ENCODE measurements at regions of chr3 and their contacts with region 1.

Region 1: GRCh38 chr3:118884748-118885206 is 149.9 kb downstream of the IGSF11 start:
- DNase-seq: peak; percentile 87
- ATAC-seq: peak; percentile 87
- H3K4me3 Mint-ChIP-seq: no peak overlapping the region
- H3K27ac Mint-ChIP-seq: no peak overlapping the region
- H3K4me1 Mint-ChIP-seq: peaks cover 5% of the 10 kb centered on the region
- H3K27me3 Mint-ChIP-seq: peaks cover 12% of the 10 kb centered on the region
- CTCF ChIP-seq: peak; percentile 92

Region 2: GRCh38 chr3:117671722-117672318 is 1213.0 kb before region 1 on chr3:
- CTCF ChIA-PET with region 1: no interaction called
- POLR2A ChIA-PET with region 1: no interaction called
- intact Hi-C with region 1: no loop called
- DNase-seq: no peak
- ATAC-seq: no peak
- H3K4me3 Mint-ChIP-seq: no peak overlapping the region
- H3K27ac Mint-ChIP-seq: no peak overlapping the region
- H3K4me1 Mint-ChIP-seq: no peaks in the 10 kb centered on the region
- H3K27me3 Mint-ChIP-seq: no peaks in the 10 kb centered on the region
- CTCF ChIP-seq: no peak

Region 3: GRCh38 chr3:118536764-118537163 is 348.0 kb before region 1 on chr3:
- CTCF ChIA-PET with region 1: no interaction called
- POLR2A ChIA-PET with region 1: no interaction called
- intact Hi-C with region 1: no loop called
- DNase-seq: no peak
- ATAC-seq: no peak
- H3K4me3 Mint-ChIP-seq: no peak overlapping the region
- H3K27ac Mint-ChIP-seq: no peak overlapping the region
- H3K4me1 Mint-ChIP-seq: no peaks in the 10 kb centered on the region
- H3K27me3 Mint-ChIP-seq: no peaks in the 10 kb centered on the region
- CTCF ChIP-seq: no peak

Region 4: GRCh38 chr3:118782755-118783202 is 102.0 kb before region 1 on chr3:
- CTCF ChIA-PET with region 1: no interaction called
- POLR2A ChIA-PET with region 1: no interaction called
- intact Hi-C with region 1: no loop called
- DNase-seq: no peak
- ATAC-seq: no peak
- H3K4me3 Mint-ChIP-seq: no peak overlapping the region
- H3K27ac Mint-ChIP-seq: no peak overlapping the region
- H3K4me1 Mint-ChIP-seq: no peaks in the 10 kb centered on the region
- H3K27me3 Mint-ChIP-seq: peaks cover 2% of the 10 kb centered on the region
- CTCF ChIP-seq: no peak

Region 5: GRCh38 chr3:118909763-118910162 is 25.0 kb after region 1 on chr3:
- CTCF ChIA-PET with region 1: interaction called, 17 read pairs
- POLR2A ChIA-PET with region 1: no interaction called
- intact Hi-C with region 1: no loop called
- DNase-seq: no peak
- ATAC-seq: no peak
- H3K4me3 Mint-ChIP-seq: no peak overlapping the region
- H3K27ac Mint-ChIP-seq: no peak overlapping the region
- H3K4me1 Mint-ChIP-seq: no peaks in the 10 kb centered on the region
- H3K27me3 Mint-ChIP-seq: no peaks in the 10 kb centered on the region
- CTCF ChIP-seq: no peak

Region 6: DNA sequence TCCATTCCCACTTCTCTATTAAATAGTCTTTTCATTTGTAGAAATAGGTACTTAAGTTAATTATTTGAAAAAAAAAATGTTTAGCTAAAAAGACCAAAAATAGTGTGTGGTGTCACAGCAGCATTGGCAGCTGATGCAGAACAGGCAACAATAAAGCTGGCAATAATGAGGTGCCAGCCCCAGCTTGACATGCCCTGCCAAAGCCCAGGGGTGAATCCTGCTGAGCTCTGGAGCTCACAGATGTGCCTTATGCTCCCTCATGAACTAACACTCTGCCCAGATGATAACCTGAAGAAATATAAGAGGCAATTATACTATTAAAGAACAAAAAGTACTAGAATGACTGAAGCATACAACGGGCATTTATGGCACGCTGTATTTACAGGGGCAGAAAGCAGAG is 86.0 kb after region 1 on chr3:
- CTCF ChIA-PET with region 1: interaction called, 45 read pairs
- POLR2A ChIA-PET with region 1: no interaction called
- intact Hi-C with region 1: no loop called
- DNase-seq: no peak
- ATAC-seq: no peak
- H3K4me3 Mint-ChIP-seq: no peak overlapping the region
- H3K27ac Mint-ChIP-seq: no peak overlapping the region
- H3K4me1 Mint-ChIP-seq: no peaks in the 10 kb centered on the region
- H3K27me3 Mint-ChIP-seq: no peaks in the 10 kb centered on the region
- CTCF ChIP-seq: no peak

Region 7: DNA sequence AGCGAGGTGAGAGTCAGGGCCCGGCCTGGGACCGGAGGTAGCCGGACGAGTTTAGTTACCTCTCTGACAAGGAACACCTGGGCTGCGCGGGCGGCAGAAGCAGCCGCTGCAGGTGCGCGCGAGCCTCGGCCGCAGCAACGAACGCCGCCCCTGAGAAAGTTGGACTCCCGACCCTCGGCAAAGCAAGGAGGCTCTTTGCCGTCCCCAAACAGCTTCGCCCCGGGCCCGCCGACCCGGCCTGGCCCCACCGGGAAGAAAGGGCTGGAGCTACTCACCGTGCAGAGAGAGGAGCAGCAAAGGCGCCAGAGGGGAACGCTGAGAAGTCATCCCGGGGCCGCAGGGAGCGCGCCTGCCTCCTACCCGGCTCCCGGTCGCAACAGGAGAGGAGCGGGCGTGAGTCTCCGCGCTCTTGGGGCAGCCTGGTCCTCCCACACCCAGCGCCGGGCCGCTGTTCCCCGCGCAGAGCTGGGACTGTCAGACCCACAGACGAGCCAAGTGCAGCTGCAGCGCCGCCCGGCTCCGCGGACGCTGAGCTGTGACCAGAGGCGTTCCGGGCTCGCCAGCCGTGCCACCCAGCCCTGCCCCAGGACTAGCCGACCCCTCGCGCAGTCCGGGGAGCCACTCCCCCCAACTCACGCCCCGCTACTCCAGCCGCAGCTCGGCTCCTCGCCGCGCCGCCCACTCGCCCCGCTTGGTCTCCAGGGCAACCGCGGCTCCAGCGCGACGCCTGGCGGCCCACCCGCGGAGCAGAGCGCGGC is 149.7 kb after region 1 on chr3 and contains the start of gene IGSF11:
- CTCF ChIA-PET with region 1: interaction called, 305 read pairs
- POLR2A ChIA-PET with region 1: no interaction called
- intact Hi-C with region 1: loop called (anchors 1 kb)
- DNase-seq: peak; percentile 71
- ATAC-seq: peak; percentile 91
- H3K4me3 Mint-ChIP-seq: peak within 1 kb of the TSS; percentile 79
- H3K27ac Mint-ChIP-seq: no peak within 1 kb of the TSS
- H3K4me1 Mint-ChIP-seq: peaks cover 12% of the 10 kb centered on the region
- H3K27me3 Mint-ChIP-seq: peaks cover 44% of the 10 kb centered on the region
- CTCF ChIP-seq: peak; percentile 73
- total RNA-seq, gene IGSF11: 0.07 TPM in 1 of 2 experiments, not detected in the other

Region 8: DNA sequence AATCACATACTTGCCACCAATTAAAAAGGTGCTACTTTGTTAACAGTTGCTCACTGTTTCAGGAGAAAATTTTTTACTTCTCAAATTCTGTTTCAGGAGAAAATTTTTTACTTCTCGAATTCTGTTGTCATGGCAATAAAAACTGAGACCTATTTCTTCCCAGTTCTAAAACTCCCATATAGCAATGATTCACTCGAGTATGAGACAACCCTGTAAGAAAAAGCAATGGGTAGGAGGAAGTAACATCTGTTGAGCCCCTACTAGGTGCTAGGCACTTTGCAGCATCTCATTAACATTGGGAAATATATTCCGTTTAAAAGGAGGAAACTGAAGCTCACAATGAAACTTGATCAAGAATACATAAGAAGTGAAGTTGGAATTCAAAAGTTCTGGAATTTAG is 184.9 kb after region 1 on chr3:
- CTCF ChIA-PET with region 1: interaction called, 29 read pairs
- POLR2A ChIA-PET with region 1: no interaction called
- intact Hi-C with region 1: no loop called
- DNase-seq: no peak
- ATAC-seq: no peak
- H3K4me3 Mint-ChIP-seq: no peak overlapping the region
- H3K27ac Mint-ChIP-seq: no peak overlapping the region
- H3K4me1 Mint-ChIP-seq: no peaks in the 10 kb centered on the region
- H3K27me3 Mint-ChIP-seq: peaks cover 11% of the 10 kb centered on the region
- CTCF ChIP-seq: no peak

Region 9: DNA sequence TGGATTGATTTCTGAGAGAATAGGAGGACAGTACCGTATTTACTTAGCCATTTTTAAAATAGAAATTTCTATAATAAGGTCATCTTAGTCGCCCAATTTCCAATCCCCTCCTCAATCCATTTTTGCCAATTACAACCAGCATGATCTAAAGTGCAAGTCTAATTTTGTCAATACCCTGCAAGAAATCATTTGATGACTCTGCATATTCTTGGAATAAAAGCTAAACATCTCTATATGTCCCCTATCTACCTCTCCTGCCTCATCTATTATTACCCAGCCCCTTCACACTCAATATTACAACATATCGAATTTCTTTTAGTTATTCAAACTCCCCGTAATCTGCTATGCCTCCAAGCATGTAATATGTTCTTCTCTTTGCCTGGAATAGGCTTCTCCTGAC is 219.3 kb after region 1 on chr3:
- CTCF ChIA-PET with region 1: interaction called, 399 read pairs
- POLR2A ChIA-PET with region 1: no interaction called
- intact Hi-C with region 1: no loop called
- DNase-seq: no peak
- ATAC-seq: no peak
- H3K4me3 Mint-ChIP-seq: no peak overlapping the region
- H3K27ac Mint-ChIP-seq: no peak overlapping the region
- H3K4me1 Mint-ChIP-seq: no peaks in the 10 kb centered on the region
- H3K27me3 Mint-ChIP-seq: peaks cover 2% of the 10 kb centered on the region
- CTCF ChIP-seq: no peak

Measured in activated CD8-positive, alpha-beta T cell treated with anti-CD3 and anti-CD28 coated beads for 36 hours (primary cell).